ENCODE measurements at regions of chr14 and their contacts with region 1.

Region 1: DNA sequence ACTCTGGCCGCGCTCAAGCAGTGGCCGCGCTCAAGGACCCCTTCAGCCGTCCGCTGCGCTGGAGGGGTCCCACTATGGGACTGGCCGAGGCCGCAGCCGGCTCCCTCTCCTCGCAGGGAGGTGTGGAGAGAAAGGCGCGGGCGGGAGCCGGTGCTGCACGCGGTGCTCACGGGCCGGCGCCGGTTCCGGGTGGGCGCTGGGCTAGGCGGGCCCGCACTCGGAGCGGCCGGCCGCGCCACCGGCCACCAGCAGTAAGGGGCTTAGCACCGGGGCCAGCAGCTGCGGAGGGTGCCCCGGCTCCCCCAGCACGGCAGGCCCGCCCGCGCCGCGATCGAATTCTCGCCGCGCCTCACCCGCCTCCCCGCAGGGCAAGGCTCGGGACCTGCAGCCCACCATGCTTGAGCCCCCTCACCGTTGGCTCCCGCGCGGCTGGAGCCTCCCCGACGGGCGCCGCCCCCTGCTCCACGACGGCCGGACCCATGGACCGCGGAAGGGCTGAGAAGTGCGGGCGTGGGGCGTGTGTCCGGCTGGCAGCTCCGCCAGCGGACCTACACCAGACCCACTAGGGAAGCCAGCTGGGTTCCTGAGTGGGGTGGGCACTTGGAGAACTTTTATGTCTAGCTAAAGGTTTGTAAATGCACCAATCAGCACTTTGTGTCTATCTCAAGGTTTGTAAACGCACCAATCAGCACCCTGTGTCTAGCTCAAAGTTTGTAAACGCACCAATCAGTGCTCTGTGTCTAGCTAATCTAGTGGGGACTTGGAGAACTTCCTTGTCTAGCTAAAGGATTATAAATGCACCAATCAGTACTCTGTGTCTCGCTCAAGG is 49.5 kb downstream of the KLHL28 start:
- DNase-seq: peak; percentile 42
- ATAC-seq: peak; percentile 71

Region 2: DNA sequence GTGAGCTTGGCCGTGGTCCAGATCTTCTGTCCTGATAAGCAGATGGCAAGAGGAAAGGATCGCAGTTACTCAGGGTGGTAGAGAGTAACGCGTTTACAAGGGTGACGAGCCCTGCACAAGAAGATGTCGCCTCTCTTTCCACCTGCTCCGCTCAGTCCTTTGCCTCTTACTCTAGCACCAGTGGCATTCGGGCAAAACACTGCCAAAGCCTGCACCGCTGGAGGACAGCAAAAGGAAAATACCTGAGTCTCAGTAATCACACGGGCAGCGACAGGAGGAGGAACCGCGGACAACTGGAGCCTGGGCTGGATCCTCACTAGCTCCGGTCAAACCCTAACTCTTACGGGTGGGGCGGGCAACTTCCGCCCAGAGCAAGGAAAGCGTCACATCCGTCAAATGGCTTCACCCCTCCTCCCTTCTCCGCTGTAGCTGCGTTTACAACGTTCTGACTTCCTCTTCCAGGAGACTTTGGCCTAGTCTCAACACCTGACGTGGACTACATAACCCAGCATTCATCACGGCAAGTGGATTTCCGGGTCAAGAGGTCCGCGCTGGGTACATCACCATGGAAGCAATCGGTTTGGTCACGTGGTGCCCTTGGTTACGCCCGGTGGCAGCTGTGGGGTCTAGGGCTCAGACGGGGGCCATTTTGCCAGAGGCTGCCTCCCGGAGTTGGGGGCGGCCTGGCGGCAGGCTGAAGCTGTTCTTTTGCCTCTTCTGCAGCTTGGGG is 49.5 kb after region 1 on chr14 and contains the starts of genes KLHL28 and TOGARAM1:
- intact Hi-C with region 1: loop called (anchors 5 kb)
- DNase-seq: peak; percentile 93
- ATAC-seq: peak; percentile 96
- total RNA-seq, gene KLHL28: 13.0 TPM
- total RNA-seq, gene TOGARAM1: 21.9 TPM

Region 3: GRCh38 chr14:45270031-45270430 is 357.8 kb after region 1 on chr14:
- intact Hi-C with region 1: loop called (anchors 5 kb)
- DNase-seq: no peak
- ATAC-seq: no peak

Measured in left ventricle myocardium superior (tissue), 1 donor.